ENCODE measurements at regions of chr7 and their contacts with region 1.

Region 1: GRCh38 chr7:38107486-38107893 is 70.6 kb upstream of the STARD3NL start:
- DNase-seq: peak; percentile 71
- H3K4me3 ChIP-seq: no peak overlapping the region
- H3K27ac ChIP-seq: no peak overlapping the region
- H3K4me1 ChIP-seq: no peaks in the 10 kb centered on the region
- CTCF ChIP-seq: peak; percentile 93

Region 2: GRCh38 chr7:38215735-38216670 is 108.5 kb after region 1 on chr7:
- CTCF ChIA-PET with region 1: interaction called, 3 read pairs
- POLR2A ChIA-PET with region 1: no interaction called
- intact Hi-C with region 1: loop called (anchors 2 kb)
- DNase-seq: peak; percentile 71
- H3K4me3 ChIP-seq: no peak overlapping the region
- H3K27ac ChIP-seq: no peak overlapping the region
- H3K4me1 ChIP-seq: no peaks in the 10 kb centered on the region
- CTCF ChIP-seq: peak; percentile 96

Region 3: GRCh38 chr7:38222481-38223096 is 115.1 kb after region 1 on chr7:
- CTCF ChIA-PET with region 1: interaction called, 3 read pairs
- POLR2A ChIA-PET with region 1: no interaction called
- intact Hi-C with region 1: loop called (anchors 1 kb)
- DNase-seq: peak; percentile 63
- H3K4me3 ChIP-seq: no peak overlapping the region
- H3K27ac ChIP-seq: no peak overlapping the region
- H3K4me1 ChIP-seq: no peaks in the 10 kb centered on the region
- CTCF ChIP-seq: peak; percentile 94

Region 4: GRCh38 chr7:38274486-38274885 is 167.0 kb after region 1 on chr7:
- CTCF ChIA-PET with region 1: no interaction called
- POLR2A ChIA-PET with region 1: no interaction called
- intact Hi-C with region 1: no loop called
- DNase-seq: no peak
- H3K4me3 ChIP-seq: no peak overlapping the region
- H3K27ac ChIP-seq: no peak overlapping the region
- H3K4me1 ChIP-seq: no peaks in the 10 kb centered on the region
- CTCF ChIP-seq: no peak

Region 5: GRCh38 chr7:38318803-38319416 is 211.4 kb after region 1 on chr7:
- CTCF ChIA-PET with region 1: no interaction called
- POLR2A ChIA-PET with region 1: interaction called, 3 read pairs
- intact Hi-C with region 1: loop called (anchors 1 kb)
- DNase-seq: peak; percentile 88
- H3K4me3 ChIP-seq: no peak overlapping the region
- H3K27ac ChIP-seq: peak overlapping the region; percentile 53
- H3K4me1 ChIP-seq: peaks cover 22% of the 10 kb centered on the region
- CTCF ChIP-seq: peak; percentile 89

Region 6: GRCh38 chr7:38335492-38336147 is 228.1 kb after region 1 on chr7:
- CTCF ChIA-PET with region 1: interaction called, 4 read pairs
- POLR2A ChIA-PET with region 1: interaction called, 5 read pairs
- intact Hi-C with region 1: loop called (anchors 5 kb)
- DNase-seq: peak; percentile 86
- H3K4me3 ChIP-seq: no peak overlapping the region
- H3K27ac ChIP-seq: no peak overlapping the region
- H3K4me1 ChIP-seq: peaks cover 32% of the 10 kb centered on the region
- CTCF ChIP-seq: peak; percentile 95

Region 7: GRCh38 chr7:38369816-38370493 is 262.5 kb after region 1 on chr7:
- CTCF ChIA-PET with region 1: no interaction called
- POLR2A ChIA-PET with region 1: interaction called, 3 read pairs
- intact Hi-C with region 1: loop called (anchors 5 kb)
- DNase-seq: peak; percentile 80
- H3K4me3 ChIP-seq: no peak overlapping the region
- H3K27ac ChIP-seq: no peak overlapping the region
- H3K4me1 ChIP-seq: peaks cover 19% of the 10 kb centered on the region
- CTCF ChIP-seq: peak; percentile 96